ENCODE measurements at regions of chr22 and their contacts with region 1.

Region 1: DNA sequence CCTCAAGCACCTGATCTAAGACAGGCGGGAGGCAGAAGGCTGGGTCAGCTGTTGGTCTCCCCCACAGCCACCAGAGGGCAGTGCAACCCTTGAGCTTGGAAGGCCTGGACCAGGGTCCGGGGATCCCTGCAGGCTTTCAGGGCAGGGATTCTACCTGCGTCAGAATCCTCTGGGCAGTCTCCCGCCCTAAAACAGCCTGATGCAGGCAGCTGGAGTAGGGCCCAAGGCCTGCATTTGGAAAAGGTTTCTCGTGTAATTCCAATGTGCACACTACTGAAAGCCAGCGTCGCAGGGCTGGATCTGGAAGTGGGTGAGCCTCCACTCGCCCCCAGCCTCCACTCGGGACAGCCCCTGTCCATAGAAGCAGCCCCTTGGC is 31.8 kb downstream of the BID start:
- DNase-seq: no peak
- ATAC-seq: peak; percentile 98
- H3K4me3 ChIP-seq: no peak overlapping the region
- H3K27ac ChIP-seq: no peak overlapping the region
- H3K4me1 ChIP-seq: peaks cover 7% of the 10 kb centered on the region
- H3K27me3 ChIP-seq: no peaks in the 10 kb centered on the region
- CTCF ChIP-seq: peak; percentile 84 to 94 (median 90)
- EP300 ChIP-seq: no peak
- POLR2A ChIP-seq: no peak; the same call in 1 of the 2 replicates
- RAD21 ChIP-seq: peak; percentile 98

Region 2: DNA sequence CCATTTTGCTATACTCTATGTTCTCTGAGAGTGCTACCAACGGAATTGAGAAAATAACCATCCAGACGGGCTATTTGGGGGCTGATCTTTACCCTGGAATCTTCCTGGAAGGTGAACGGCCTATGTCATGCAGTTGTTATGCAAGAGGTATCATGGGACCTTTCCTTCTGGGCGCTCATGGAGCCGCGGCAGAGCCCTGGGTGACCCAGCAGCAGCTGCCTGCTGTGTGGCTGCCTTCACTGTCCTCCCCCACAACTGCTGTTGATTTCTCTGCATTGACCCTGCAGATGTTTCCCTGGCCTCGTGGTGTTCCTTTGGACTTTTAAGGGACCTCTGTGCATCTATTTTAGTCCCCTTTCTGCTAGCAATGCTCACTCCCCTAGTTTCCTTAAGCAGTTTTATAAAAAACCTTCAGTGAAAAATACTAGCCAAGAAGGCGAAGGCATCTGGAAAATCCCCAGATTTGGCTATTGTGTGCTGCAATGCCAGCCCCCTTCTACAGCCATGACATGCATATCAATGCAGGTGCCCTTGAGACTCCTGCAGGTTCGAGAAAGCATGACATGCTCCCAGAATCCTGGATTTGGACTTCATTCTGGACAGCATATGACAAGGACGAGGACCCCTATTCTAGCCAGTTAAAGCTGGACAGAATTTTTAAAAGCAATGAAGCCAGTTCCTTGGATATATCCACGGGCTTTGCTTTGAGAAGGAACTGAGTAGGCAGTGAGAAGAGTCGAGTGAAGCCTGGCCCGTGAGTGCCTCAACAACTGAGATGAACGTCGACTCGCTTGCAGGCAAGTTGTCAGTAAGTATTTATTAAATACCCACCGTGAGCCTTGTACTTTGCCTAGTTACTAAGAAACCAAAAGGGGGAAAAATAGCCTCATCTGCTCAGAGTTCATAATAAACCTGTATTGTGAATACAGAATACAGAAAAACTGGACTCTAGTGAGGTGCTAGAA is 179.3 kb before region 1 on chr22 and contains the start of gene SLC25A18:
- CTCF ChIA-PET with region 1: interaction called, 32 read pairs
- POLR2A ChIA-PET with region 1: no interaction called
- RAD21 ChIA-PET with region 1: interaction called, 4 read pairs
- SMC1A ChIA-PET with region 1: interaction called, 9 read pairs
- in situ Hi-C with region 1: no loop called
- intact Hi-C with region 1: loop called (anchors 5 kb)
- DNase-seq: no peak
- ATAC-seq: no peak
- H3K4me3 ChIP-seq: no peak within 1 kb of the TSS
- H3K27ac ChIP-seq: no peak within 1 kb of the TSS
- H3K4me1 ChIP-seq: no peaks in the 10 kb centered on the region
- H3K27me3 ChIP-seq: no peaks in the 10 kb centered on the region; a peak in 1 of 4 replicates
- CTCF ChIP-seq: no peak
- EP300 ChIP-seq: no peak
- POLR2A ChIP-seq: no peak
- RAD21 ChIP-seq: no peak
- polyA plus RNA-seq, gene SLC25A18: 0.03 TPM in 1 of 2 experiments, not detected in the other

Region 3: DNA sequence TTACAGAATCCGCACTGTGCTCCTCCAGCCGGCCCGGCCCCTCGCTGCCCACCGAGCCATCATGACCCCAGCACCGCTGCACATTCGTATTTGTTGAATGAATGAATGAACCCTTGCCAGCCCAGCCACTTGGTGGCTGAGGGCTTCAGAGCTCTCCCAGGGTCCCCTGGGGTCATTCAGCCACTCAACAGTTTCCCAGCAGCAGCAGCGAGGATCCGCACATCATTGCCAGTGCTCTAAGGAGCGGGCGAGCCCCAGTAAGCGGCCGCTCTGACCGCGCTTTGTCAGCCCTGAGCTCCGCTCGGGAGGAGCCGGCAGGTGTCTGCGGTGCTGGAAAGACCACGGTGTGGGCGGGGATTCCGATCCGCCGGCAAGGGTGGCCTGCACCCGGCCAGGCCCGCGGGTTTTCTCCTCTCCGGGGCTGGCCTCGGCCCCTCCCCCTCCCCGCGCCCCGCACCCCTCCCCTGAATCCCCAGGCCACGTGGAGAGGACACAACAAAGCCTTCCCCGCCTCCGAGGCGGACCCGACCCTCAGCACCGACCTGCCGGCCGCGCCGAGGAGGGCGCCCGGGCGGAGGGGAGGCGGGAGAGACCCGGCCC is 31.2 kb after region 1 on chr22:
- CTCF ChIA-PET with region 1: interaction called, 33 read pairs
- POLR2A ChIA-PET with region 1: no interaction called
- RAD21 ChIA-PET with region 1: interaction called, 20 read pairs
- SMC1A ChIA-PET with region 1: interaction called, 24 read pairs
- in situ Hi-C with region 1: no loop called
- intact Hi-C with region 1: no loop called
- DNase-seq: no peak
- ATAC-seq: peak; percentile 49
- H3K4me3 ChIP-seq: peak overlapping the region; percentile 83
- H3K27ac ChIP-seq: peak overlapping the region; percentile 69
- H3K4me1 ChIP-seq: peaks cover 46% of the 10 kb centered on the region
- H3K27me3 ChIP-seq: no peaks in the 10 kb centered on the region
- CTCF ChIP-seq: no peak
- EP300 ChIP-seq: no peak
- POLR2A ChIP-seq: no peak; the same call in none of the 2 replicates
- RAD21 ChIP-seq: no peak

Region 4: GRCh38 chr22:17797721-17798559 is 55.4 kb after region 1 on chr22:
- CTCF ChIA-PET with region 1: interaction called, 34 read pairs
- POLR2A ChIA-PET with region 1: no interaction called
- RAD21 ChIA-PET with region 1: interaction called, 7 read pairs
- SMC1A ChIA-PET with region 1: interaction called, 4 read pairs
- in situ Hi-C with region 1: loop called (anchors 10 kb)
- intact Hi-C with region 1: loop called (anchors 1 kb)
- DNase-seq: peak; percentile 95
- ATAC-seq: peak; percentile 64
- H3K4me3 ChIP-seq: peak overlapping the region; percentile 63
- H3K27ac ChIP-seq: peak overlapping the region; percentile 100
- H3K4me1 ChIP-seq: peaks cover 86% of the 10 kb centered on the region
- H3K27me3 ChIP-seq: no peaks in the 10 kb centered on the region
- CTCF ChIP-seq: no peak
- EP300 ChIP-seq: peak; percentile 99 to 100
- POLR2A ChIP-seq: peak; percentile 41
- RAD21 ChIP-seq: no peak; the same call in 1 of the 2 replicates

Region 5: DNA sequence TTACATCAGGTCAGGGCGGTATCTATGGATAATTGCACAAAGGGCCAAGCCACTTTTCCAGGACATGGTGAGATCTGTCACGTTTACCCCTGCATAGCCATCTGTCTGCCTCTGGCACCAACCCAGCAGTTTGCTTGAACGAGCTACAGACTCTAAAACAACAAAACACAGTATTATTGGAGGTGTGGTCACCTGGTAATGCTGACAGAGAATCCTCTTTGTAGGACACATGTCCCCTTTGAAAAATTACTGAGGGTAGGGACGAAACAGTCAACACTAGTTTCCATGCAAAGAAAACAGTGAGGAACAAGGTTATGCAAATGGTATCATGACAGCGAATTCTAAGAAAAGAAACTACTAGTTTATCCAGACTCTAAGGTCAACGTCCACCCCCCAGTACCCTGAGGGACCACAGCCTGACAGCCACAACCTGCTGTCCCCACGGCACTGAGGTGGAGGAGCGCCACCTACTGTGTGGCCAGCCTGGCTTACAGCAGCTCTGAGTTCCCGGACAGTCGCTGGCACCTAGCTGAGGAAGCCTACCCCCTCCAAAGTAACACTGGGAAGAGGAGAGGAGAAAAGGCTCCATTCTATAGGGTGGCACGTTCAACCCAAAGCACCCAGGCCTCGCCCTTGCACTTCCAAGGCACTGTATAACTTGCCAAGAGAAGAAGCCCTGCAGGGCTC is 149.1 kb after region 1 on chr22:
- CTCF ChIA-PET with region 1: interaction called, 12 read pairs
- POLR2A ChIA-PET with region 1: no interaction called
- RAD21 ChIA-PET with region 1: interaction called, 6 read pairs
- SMC1A ChIA-PET with region 1: interaction called, 5 read pairs
- in situ Hi-C with region 1: no loop called
- intact Hi-C with region 1: no loop called
- DNase-seq: no peak
- ATAC-seq: peak; percentile 62; the same call in 2 of the 3 replicates
- H3K4me3 ChIP-seq: no peak overlapping the region
- H3K27ac ChIP-seq: no peak overlapping the region
- H3K4me1 ChIP-seq: no peaks in the 10 kb centered on the region
- H3K27me3 ChIP-seq: no peaks in the 10 kb centered on the region
- CTCF ChIP-seq: peak; percentile 27 to 42 (median 36); a peak in 4 of 6 replicates
- EP300 ChIP-seq: no peak
- POLR2A ChIP-seq: no peak
- RAD21 ChIP-seq: peak; percentile 30